ENCODE measurements at regions of chr11 and their contacts with region 1.

Region 1: DNA sequence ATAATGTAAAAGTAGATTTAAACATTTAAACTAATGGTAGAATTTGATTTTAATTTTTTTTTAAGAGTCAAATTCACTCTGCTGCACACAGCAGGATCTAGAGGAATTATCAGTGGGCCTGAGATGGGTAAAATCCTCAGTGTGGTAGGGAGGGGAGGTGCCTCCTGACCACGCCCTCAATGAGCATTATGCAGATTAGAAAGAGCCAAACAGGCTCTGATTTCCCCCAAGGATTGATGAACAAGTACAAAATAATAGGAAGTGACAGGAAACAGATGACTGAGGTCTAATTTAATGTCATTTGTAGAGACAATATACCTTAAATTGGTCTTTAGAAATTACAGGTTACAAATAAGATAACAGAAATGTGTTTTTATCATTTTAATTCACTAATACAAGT is 155.2 kb downstream of the DCDC1 start:
- DNase-seq: no peak
- H3K4me3 ChIP-seq: no peak overlapping the region
- H3K27ac ChIP-seq: no peak overlapping the region
- H3K27me3 ChIP-seq: no peaks in the 10 kb centered on the region
- CTCF ChIP-seq: no peak

Region 2: GRCh38 chr11:31107062-31107461 is 107.3 kb before region 1 on chr11:
- CTCF ChIA-PET with region 1: interaction called, 12 read pairs
- POLR2A ChIA-PET with region 1: no interaction called
- DNase-seq: no peak
- H3K4me3 ChIP-seq: no peak overlapping the region
- H3K27ac ChIP-seq: no peak overlapping the region
- H3K27me3 ChIP-seq: no peaks in the 10 kb centered on the region
- CTCF ChIP-seq: peak; percentile 46